Activated CD4-positive, alpha-beta T cell treated with anti-CD3 and anti-CD28 coated beads for 36 hours (primary cell): ENCODE measurements at regions of chr3 and their contacts with region 1.

Region 1: GRCh38 chr3:52056968-52057805 is 816 bp upstream of the DUSP7 start:
- DNase-seq: peak; percentile 100
- ATAC-seq: peak; percentile 81
- H3K4me3 Mint-ChIP-seq: peak overlapping the region; percentile 85
- H3K27ac Mint-ChIP-seq: peak overlapping the region; percentile 93
- H3K4me1 Mint-ChIP-seq: peaks cover 30% of the 10 kb centered on the region
- H3K27me3 Mint-ChIP-seq: no peaks in the 10 kb centered on the region

Region 2: DNA sequence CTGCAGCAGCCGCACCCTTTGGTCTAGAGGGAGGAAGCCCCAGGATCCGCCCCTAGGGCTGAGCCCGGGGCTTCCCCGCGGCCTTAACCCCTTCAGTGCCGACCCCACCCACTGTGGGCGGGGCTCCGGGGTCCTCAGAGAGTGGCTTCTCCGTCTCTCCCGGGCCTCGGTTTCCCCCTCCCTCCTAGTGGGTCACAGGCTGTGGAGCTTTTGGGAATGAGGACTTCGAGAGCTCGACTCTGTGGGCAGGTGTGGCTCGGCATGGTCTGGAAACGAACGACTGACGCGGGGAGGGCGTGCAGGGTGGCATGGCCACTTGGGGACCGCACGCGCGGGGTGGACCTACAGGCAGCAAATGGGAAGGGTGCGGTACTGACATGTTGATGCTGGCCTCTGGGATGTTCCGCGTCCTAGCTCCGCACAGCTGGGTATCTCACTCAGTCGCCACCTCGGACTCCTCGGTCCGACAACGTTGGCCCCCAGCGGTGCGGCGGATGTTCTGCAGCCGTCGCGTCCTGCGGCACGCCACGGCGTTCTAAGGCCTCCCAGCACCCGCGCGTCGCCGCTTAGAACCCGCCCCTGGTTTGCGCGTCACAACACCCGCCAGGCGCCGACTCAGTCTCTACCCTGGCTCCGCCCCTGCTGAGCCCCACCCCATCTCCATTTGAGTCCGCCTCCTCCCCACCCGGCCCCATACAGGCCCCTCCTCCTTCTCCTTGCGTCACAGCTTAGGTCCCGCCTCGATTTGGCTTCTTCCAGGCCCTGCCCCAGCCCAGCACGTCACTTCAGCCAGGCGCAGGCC is 1758.2 kb before region 1 on chr3 and contains the starts of genes HYAL3 and NAA80:
- CTCF ChIA-PET with region 1: no interaction called
- POLR2A ChIA-PET with region 1: no interaction called
- intact Hi-C with region 1: loop called in 1 of 2 experiments (anchors 2 kb)
- DNase-seq: peak; percentile 100
- ATAC-seq: peak; percentile 89
- H3K4me3 Mint-ChIP-seq: peak within 1 kb of the TSS; percentile 97
- H3K27ac Mint-ChIP-seq: peak within 1 kb of the TSS; percentile 96
- H3K4me1 Mint-ChIP-seq: peaks cover 13% of the 10 kb centered on the region
- H3K27me3 Mint-ChIP-seq: no peaks in the 10 kb centered on the region
- total RNA-seq, gene HYAL3: 4.5 to 5.4 TPM
- total RNA-seq, gene NAA80: 17.6 to 18.7 TPM

Region 3: DNA sequence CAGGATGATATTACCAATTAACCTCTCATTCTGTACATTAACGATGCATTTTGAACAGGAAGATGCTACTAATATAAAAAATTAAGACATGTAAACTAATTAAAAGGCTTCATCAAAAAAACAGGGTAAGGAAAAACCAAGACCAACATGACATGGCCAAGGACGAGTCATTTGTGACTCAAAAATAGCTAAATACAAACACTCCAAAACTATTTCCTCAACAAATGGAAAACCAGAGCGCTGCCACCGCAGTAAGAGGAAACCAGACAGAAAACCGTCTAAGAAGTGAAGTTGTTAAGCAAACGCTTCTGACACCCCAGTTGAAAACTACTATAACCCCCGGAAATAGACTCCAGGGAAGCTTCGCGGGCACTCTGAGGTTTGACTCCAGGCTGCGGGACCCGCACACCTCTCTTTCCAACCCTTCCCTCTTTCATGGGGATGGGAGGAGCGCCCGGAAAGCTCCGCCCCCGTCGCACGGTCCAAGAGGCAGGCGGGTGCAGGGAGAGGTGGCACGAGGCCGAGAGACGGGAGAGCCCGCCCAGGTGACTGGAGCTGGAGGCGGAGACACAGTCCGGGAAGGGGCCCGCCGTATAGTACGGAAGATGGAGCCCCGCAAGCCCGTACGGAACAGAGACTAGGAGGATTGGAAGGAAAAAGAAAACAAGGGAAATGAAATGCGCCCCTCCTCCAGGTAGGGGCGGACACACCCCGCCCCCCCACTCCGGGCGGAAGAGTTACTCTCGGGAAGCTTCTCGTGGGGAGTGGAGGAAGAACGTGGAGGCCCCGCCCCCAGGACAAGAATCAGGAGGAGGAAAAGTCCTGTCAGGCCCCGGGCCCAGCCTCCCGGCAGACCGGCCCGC is 558.1 kb before region 1 on chr3:
- CTCF ChIA-PET with region 1: no interaction called
- POLR2A ChIA-PET with region 1: no interaction called
- intact Hi-C with region 1: loop called in 1 of 2 experiments (anchors 1 kb)
- DNase-seq: peak; percentile 94
- ATAC-seq: peak; percentile 75
- H3K4me3 Mint-ChIP-seq: peak overlapping the region; percentile 88
- H3K27ac Mint-ChIP-seq: peak overlapping the region; percentile 97
- H3K4me1 Mint-ChIP-seq: peaks cover 16% of the 10 kb centered on the region
- H3K27me3 Mint-ChIP-seq: no peaks in the 10 kb centered on the region

Region 4: GRCh38 chr3:51982782-51983577 is 74.2 kb before region 1 on chr3 and contains the start of gene ACY1:
- CTCF ChIA-PET with region 1: interaction called, 21 read pairs
- POLR2A ChIA-PET with region 1: interaction called, 6 read pairs
- intact Hi-C with region 1: loop called in 1 of 2 experiments (anchors 1 kb)
- DNase-seq: peak; percentile 90
- ATAC-seq: peak; percentile 88
- H3K4me3 Mint-ChIP-seq: peak within 1 kb of the TSS; percentile 96
- H3K27ac Mint-ChIP-seq: peak within 1 kb of the TSS; percentile 96
- H3K4me1 Mint-ChIP-seq: peaks cover 20% of the 10 kb centered on the region
- H3K27me3 Mint-ChIP-seq: no peaks in the 10 kb centered on the region
- total RNA-seq, gene ACY1: 61.5 to 90.0 TPM

Region 5: GRCh38 chr3:52144034-52144795 is 87.0 kb after region 1 on chr3:
- CTCF ChIA-PET with region 1: interaction called, 6 read pairs
- POLR2A ChIA-PET with region 1: no interaction called
- intact Hi-C with region 1: loop called (anchors 1 to 5 kb)
- DNase-seq: peak; percentile 91
- ATAC-seq: peak; percentile 96
- H3K4me3 Mint-ChIP-seq: no peak overlapping the region
- H3K27ac Mint-ChIP-seq: no peak overlapping the region
- H3K4me1 Mint-ChIP-seq: peaks cover 7% of the 10 kb centered on the region
- H3K27me3 Mint-ChIP-seq: no peaks in the 10 kb centered on the region

Region 6: DNA sequence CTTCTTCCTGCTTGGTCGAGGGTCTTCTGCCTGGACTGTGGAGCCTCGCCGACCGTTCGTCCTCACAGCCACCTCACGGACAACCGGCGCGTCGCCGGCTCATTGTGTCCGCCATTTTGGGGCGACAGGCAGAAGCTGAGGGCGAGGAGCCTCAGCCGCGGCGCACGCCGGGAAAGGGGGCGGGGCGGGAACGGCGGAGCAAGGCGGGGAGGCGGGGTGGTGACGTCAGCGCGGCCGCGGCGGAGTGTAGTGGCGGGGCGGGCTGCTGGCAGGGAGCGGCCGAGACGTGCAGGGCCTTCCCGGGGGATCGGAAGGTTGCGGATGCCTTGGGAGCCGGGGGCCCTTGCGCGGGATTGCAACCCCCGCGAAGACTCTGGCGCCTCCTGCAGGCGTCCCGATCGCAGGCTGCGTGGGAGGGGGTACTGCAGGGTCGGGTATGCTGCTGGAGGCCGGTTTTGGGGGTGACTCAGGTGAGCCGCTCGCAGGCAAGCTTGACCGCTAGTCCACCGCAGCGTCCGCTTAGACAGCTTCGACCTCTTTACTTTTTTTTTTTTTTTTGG is 221.4 kb after region 1 on chr3 and contains the start of gene WDR82:
- CTCF ChIA-PET with region 1: no interaction called
- POLR2A ChIA-PET with region 1: interaction called, 3 read pairs
- intact Hi-C with region 1: loop called in 1 of 2 experiments (anchors 1 kb)
- DNase-seq: peak; percentile 100
- ATAC-seq: peak; percentile 78
- H3K4me3 Mint-ChIP-seq: peak within 1 kb of the TSS; percentile 99
- H3K27ac Mint-ChIP-seq: peak within 1 kb of the TSS; percentile 99
- H3K4me1 Mint-ChIP-seq: peaks cover 56% of the 10 kb centered on the region
- H3K27me3 Mint-ChIP-seq: no peaks in the 10 kb centered on the region
- total RNA-seq, gene WDR82: 95.2 to 113 TPM

Region 7: DNA sequence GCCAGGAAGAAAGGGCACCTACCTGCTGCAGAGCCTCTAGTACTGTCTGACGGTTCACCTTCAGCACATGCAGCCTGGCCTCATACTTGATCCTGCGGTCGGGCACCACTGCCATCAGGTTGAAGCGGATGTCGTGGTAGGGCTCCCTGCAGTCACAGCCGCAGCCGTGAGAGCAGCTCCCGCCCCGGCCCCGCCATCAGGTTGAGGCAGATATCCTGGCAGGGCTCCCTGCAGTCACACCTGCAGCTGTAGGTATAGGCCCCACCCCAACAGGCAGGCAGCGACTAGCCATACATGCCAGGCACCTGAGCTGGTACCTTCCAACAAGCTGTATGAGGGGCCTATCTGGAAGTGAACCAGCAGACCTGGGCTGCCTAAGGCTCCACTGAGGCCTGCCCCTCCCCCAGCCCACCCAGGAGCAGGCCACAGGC is 349.1 kb after region 1 on chr3:
- CTCF ChIA-PET with region 1: no interaction called
- POLR2A ChIA-PET with region 1: no interaction called
- intact Hi-C with region 1: no loop called
- DNase-seq: no peak
- ATAC-seq: no peak
- H3K4me3 Mint-ChIP-seq: no peak overlapping the region
- H3K27ac Mint-ChIP-seq: no peak overlapping the region
- H3K4me1 Mint-ChIP-seq: peaks cover 21% of the 10 kb centered on the region
- H3K27me3 Mint-ChIP-seq: no peaks in the 10 kb centered on the region

Region 8: GRCh38 chr3:52685709-52686691 is 628.8 kb after region 1 on chr3 and contains the starts of genes GNL3 and PBRM1:
- CTCF ChIA-PET with region 1: no interaction called
- POLR2A ChIA-PET with region 1: interaction called, 4 read pairs
- intact Hi-C with region 1: loop called in 1 of 2 experiments (anchors 1 kb)
- DNase-seq: peak; percentile 97
- ATAC-seq: peak; percentile 70
- H3K4me3 Mint-ChIP-seq: peak within 1 kb of the TSS; percentile 99
- H3K27ac Mint-ChIP-seq: peak within 1 kb of the TSS; percentile 99
- H3K4me1 Mint-ChIP-seq: peaks cover 75% of the 10 kb centered on the region
- H3K27me3 Mint-ChIP-seq: no peaks in the 10 kb centered on the region
- total RNA-seq, gene GNL3: 206 to 218 TPM
- total RNA-seq, gene PBRM1: 57.6 to 59.8 TPM